K562 (cell line): ENCODE measurements at regions of chr2 and their contacts with region 1.

Region 1: GRCh38 chr2:96407041-96407918 is 71.7 kb downstream of the NCAPH start:
- DNase-seq: peak; percentile 66 to 78 (median 71)
- ATAC-seq: peak; percentile 88
- H3K4me3 ChIP-seq: no peak overlapping the region
- H3K27ac ChIP-seq: no peak overlapping the region
- H3K4me1 ChIP-seq: peaks cover 12 to 13% of the 10 kb centered on the region in 2 experiments; a peak in 4 of 5 replicates
- H3K27me3 ChIP-seq: peaks cover 13 to 31% of the 10 kb centered on the region in 2 experiments; a peak in 3 of 5 replicates
- CTCF ChIP-seq: peak; percentile 84 to 89 (median 87)
- EP300 ChIP-seq: no peak
- POLR2A ChIP-seq: no peak
- RAD21 ChIP-seq: peak; percentile 64 to 73

Region 2: DNA sequence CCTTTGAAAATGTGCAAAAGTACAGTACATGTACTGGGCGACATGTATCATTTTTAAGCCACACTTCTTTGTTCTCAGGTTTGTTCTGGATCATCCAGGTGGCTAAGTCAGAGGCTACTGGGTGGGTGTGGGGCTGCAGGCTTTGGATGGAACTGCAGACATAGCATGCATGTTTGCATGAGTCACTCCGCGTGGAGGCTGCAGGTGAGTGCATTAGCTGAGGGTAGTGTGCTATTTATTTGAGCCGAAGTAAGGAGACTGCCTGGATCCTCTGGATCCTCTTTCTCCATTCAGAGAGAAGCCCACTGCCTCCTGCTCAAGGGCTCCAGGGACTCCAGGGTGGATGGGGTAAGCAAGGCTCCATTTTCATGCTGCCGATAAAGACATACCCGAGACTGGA is 107.2 kb after region 1 on chr2:
- CTCF ChIA-PET with region 1: interaction called, 21 read pairs
- POLR2A ChIA-PET with region 1: no interaction called
- in situ Hi-C with region 1: loop called (anchors 5 kb)
- intact Hi-C with region 1: loop called (anchors 1 kb)
- DNase-seq: no peak
- ATAC-seq: no peak
- H3K4me3 ChIP-seq: no peak overlapping the region
- H3K27ac ChIP-seq: no peak overlapping the region
- H3K4me1 ChIP-seq: peaks cover 0 to 4% of the 10 kb centered on the region in 2 experiments; a peak in 1 of 5 replicates
- H3K27me3 ChIP-seq: peaks cover 2 to 29% of the 10 kb centered on the region in 2 experiments; a peak in 3 of 5 replicates
- CTCF ChIP-seq: no peak
- EP300 ChIP-seq: no peak
- POLR2A ChIP-seq: no peak
- RAD21 ChIP-seq: no peak